Activated T-helper 2 cell treated with anti-CD3 and anti-CD28 coated beads, Interferon-gamma antibody, Interleukin-2, Interleukin-4, amounts not matched to agents 10 μg/mL and 5 μg/mL and 100 μg/mL, durations not matched to agents 14 hours and 24 hours and 36 hours (primary cell): ENCODE measurements at regions of chr15 and their contacts with region 1.

Region 1: GRCh38 chr15:45457641-45458433 is 64.7 kb downstream of the SLC30A4 start:
- DNase-seq: peak; percentile 66
- H3K4me3 Mint-ChIP-seq: peak overlapping the region; percentile 79
- H3K27ac Mint-ChIP-seq: peak overlapping the region; percentile 78
- H3K4me1 Mint-ChIP-seq: peaks cover 49% of the 10 kb centered on the region
- H3K27me3 Mint-ChIP-seq: no peaks in the 10 kb centered on the region

Region 2: GRCh38 chr15:45205192-45205591 is 252.6 kb before region 1 on chr15:
- intact Hi-C with region 1: loop called (anchors 2 kb)
- DNase-seq: peak; percentile 57
- H3K4me3 Mint-ChIP-seq: no peak overlapping the region
- H3K27ac Mint-ChIP-seq: no peak overlapping the region
- H3K4me1 Mint-ChIP-seq: peaks cover 6% of the 10 kb centered on the region
- H3K27me3 Mint-ChIP-seq: peaks cover 20% of the 10 kb centered on the region

Region 3: GRCh38 chr15:45429974-45430792 is 27.7 kb before region 1 on chr15:
- intact Hi-C with region 1: loop called (anchors 1 kb)
- DNase-seq: peak; percentile 80
- H3K4me3 Mint-ChIP-seq: peak overlapping the region; percentile 39
- H3K27ac Mint-ChIP-seq: no peak overlapping the region
- H3K4me1 Mint-ChIP-seq: peaks cover 2% of the 10 kb centered on the region
- H3K27me3 Mint-ChIP-seq: peaks cover 32% of the 10 kb centered on the region

Region 4: GRCh38 chr15:45443645-45444044 is 14.2 kb before region 1 on chr15:
- intact Hi-C with region 1: no loop called
- DNase-seq: no peak
- H3K4me3 Mint-ChIP-seq: no peak overlapping the region
- H3K27ac Mint-ChIP-seq: no peak overlapping the region
- H3K4me1 Mint-ChIP-seq: peaks cover 2% of the 10 kb centered on the region
- H3K27me3 Mint-ChIP-seq: peaks cover 6% of the 10 kb centered on the region

Region 5: GRCh38 chr15:45587095-45587860 is 129.4 kb after region 1 on chr15 and contains the start of gene BLOC1S6:
- intact Hi-C with region 1: loop called (anchors 1 kb)
- DNase-seq: peak; percentile 86
- H3K4me3 Mint-ChIP-seq: peak within 1 kb of the TSS; percentile 98
- H3K27ac Mint-ChIP-seq: peak within 1 kb of the TSS; percentile 100
- H3K4me1 Mint-ChIP-seq: peaks cover 26% of the 10 kb centered on the region
- H3K27me3 Mint-ChIP-seq: peaks cover 3% of the 10 kb centered on the region
- total RNA-seq, gene BLOC1S6: 49.7 and 50.2 TPM in 2 replicates

Region 6: DNA sequence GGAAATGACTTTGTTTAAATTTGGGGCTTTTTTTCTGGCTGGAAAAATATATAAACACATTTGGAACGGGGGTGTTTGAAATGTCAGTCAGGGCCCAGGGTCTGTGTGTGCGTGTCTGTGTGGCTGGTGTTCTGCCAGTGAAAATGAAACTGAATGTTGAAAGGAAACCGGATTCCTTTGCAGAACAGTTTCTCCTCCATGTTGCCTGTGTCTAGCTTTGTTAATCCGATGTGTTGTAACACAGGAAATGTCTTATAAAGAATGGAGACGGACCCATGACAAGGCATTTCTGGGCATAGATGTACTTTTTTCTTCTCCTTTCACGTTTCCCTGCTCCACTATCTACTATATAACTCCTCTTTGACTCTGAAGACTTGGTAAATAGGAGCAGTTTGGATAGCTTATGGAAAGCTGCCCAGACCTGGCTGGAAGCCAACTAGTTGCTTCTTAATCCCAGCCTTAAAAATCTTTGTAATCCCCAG is 179.8 kb after region 1 on chr15:
- intact Hi-C with region 1: loop called (anchors 1 kb)
- DNase-seq: peak; percentile 47
- H3K4me3 Mint-ChIP-seq: peak overlapping the region; percentile 79
- H3K27ac Mint-ChIP-seq: peak overlapping the region; percentile 95
- H3K4me1 Mint-ChIP-seq: peaks cover 65% of the 10 kb centered on the region
- H3K27me3 Mint-ChIP-seq: no peaks in the 10 kb centered on the region